ENCODE measurements at regions of chr1 and their contacts with region 1.

Region 1: DNA sequence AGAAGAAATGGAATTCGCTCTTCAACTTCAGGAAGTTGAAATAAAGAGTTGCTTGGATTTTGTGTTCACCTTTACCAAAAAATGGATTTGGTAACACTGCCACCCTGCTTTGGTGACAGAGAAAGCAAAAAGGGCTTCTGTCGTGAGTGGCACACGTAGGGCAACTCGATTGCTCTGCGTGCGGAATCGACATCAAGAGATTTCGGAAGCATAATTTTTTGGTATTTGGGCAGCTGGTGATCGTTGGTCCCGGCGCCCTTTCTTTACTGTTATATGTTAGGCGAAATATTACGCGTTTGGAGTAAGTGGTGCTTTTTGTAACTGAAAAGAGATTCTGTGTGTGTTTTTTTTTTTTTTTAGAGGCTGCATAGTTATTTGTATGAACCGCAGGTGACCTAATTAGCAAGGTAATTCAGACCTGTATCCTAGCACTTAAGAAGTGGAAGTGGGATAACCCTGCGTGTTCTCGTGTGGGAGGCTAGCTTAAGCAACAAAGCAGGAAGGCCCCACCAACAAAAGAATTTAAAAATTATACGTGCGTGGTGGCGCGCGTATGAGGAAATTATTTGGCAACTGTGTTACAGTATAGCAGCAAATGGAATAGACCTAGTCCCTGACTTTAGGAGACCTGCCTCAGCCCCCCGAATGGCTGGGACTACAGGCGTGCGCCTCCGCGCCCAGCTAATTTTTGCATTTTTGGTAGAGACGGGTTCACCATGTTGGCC is at the start of gene RNU11:
- DNase-seq: peak; percentile 74 to 98 (median 80)
- ATAC-seq: peak; percentile 81
- H3K4me3 ChIP-seq: peak within 1 kb of the TSS; percentile 28
- H3K27ac ChIP-seq: peak within 1 kb of the TSS; percentile 95
- H3K4me1 ChIP-seq: peaks cover 28 to 34% of the 10 kb centered on the region in 2 experiments; a peak in 4 of 5 replicates
- H3K27me3 ChIP-seq: no peaks in the 10 kb centered on the region
- CTCF ChIP-seq: peak; percentile 1 to 32 (median 7); a peak in 3 of 6 replicates
- EP300 ChIP-seq: peak; percentile 89
- POLR2A ChIP-seq: peak; percentile 100
- RAD21 ChIP-seq: peak; percentile 38 to 47
- polyA plus RNA-seq, gene RNU11: not detected

Region 2: GRCh38 chr1:28088168-28088961 is 560.3 kb before region 1 on chr1 and contains the start of gene EYA3:
- CTCF ChIA-PET with region 1: no interaction called
- POLR2A ChIA-PET with region 1: interaction called, 11 read pairs
- in situ Hi-C with region 1: no loop called
- intact Hi-C with region 1: no loop called
- DNase-seq: peak; percentile 99 to 100 (median 100)
- ATAC-seq: peak; percentile 94
- H3K4me3 ChIP-seq: peak within 1 kb of the TSS; percentile 76
- H3K27ac ChIP-seq: peak within 1 kb of the TSS; percentile 90
- H3K4me1 ChIP-seq: peaks cover 12 to 14% of the 10 kb centered on the region in 2 experiments
- H3K27me3 ChIP-seq: no peaks in the 10 kb centered on the region
- CTCF ChIP-seq: no peak
- EP300 ChIP-seq: peak; percentile 11; the same call in 1 of the 2 replicates
- POLR2A ChIP-seq: peak; percentile 97
- RAD21 ChIP-seq: no peak
- polyA plus RNA-seq, gene EYA3: 29.4 to 43.6 TPM

Region 3: GRCh38 chr1:28518000-28518744 is 130.5 kb before region 1 on chr1:
- CTCF ChIA-PET with region 1: interaction called, 4 read pairs
- POLR2A ChIA-PET with region 1: interaction called, 22 read pairs
- in situ Hi-C with region 1: no loop called
- intact Hi-C with region 1: loop called (anchors 2 kb)
- DNase-seq: peak; percentile 93 to 96 (median 94)
- ATAC-seq: peak; percentile 76
- H3K4me3 ChIP-seq: peak overlapping the region; percentile 74
- H3K27ac ChIP-seq: peak overlapping the region; percentile 99
- H3K4me1 ChIP-seq: peaks cover 46 to 47% of the 10 kb centered on the region in 2 experiments
- H3K27me3 ChIP-seq: no peaks in the 10 kb centered on the region
- CTCF ChIP-seq: peak; percentile 96 to 99 (median 96)
- EP300 ChIP-seq: no peak
- POLR2A ChIP-seq: peak; percentile 87
- RAD21 ChIP-seq: peak; percentile 91 to 94

Region 4: GRCh38 chr1:28668191-28668955 is 19.7 kb after region 1 on chr1 and contains the start of gene GMEB1:
- CTCF ChIA-PET with region 1: no interaction called
- POLR2A ChIA-PET with region 1: interaction called, 240 read pairs
- in situ Hi-C with region 1: no loop called
- intact Hi-C with region 1: loop called (anchors 2 kb)
- DNase-seq: peak; percentile 95 to 100 (median 98)
- ATAC-seq: peak; percentile 91
- H3K4me3 ChIP-seq: peak within 1 kb of the TSS; percentile 98
- H3K27ac ChIP-seq: peak within 1 kb of the TSS; percentile 95
- H3K4me1 ChIP-seq: peaks cover 3 to 28% of the 10 kb centered on the region in 2 experiments; a peak in 4 of 5 replicates
- H3K27me3 ChIP-seq: no peaks in the 10 kb centered on the region
- CTCF ChIP-seq: peak in 1 of 3 experiments; percentile 9; a peak in 1 of 6 replicates
- EP300 ChIP-seq: no peak
- POLR2A ChIP-seq: peak; percentile 62; the same call in 1 of the 2 replicates
- RAD21 ChIP-seq: no peak
- polyA plus RNA-seq, gene GMEB1: 8.5 TPM

Region 5: DNA sequence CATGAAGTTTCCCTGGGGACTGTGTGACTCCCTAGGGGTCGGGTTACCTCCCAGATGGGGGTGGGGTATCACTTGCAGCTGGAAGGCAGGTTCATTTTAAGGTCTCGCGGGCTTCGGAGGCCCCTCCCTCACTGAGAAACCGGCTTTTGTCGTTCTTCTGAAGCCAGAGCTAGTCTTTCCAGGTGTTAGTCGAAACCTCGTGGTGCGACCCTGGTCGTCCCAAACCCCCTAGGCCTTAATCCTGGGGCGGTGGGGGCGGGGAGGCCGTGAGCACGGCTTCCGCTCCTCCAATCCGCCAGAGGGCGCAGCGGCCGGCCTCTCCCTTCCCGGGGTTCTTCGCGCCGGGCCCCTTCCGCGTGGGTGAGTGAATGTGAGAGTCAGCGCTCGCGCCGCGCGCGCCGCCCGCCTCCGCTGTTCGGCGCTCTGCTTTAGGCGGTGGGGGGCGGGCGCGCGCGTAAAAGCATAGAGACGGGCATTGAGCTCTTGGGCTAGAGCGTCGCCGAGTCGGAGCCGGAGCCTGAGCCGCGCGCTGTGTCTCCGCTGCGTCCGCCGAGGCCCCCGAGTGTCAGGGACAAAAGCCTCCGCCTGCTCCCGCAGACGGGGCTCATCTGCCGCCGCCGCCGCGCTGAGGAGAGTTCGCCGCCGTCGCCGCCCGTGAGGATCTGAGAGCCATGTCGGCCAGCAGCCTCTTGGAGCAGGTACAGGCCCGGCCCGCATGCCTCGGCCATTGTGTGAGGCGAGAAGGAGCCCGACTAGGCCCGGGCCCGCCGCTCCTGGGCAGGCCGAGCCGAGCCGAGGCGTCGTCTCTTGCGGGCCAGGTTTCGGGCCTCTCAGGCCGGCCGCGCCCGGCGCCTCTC is 88.0 kb after region 1 on chr1 and contains the start of gene YTHDF2:
- CTCF ChIA-PET with region 1: interaction called, 3 read pairs
- POLR2A ChIA-PET with region 1: interaction called, 52 read pairs
- in situ Hi-C with region 1: no loop called
- intact Hi-C with region 1: loop called (anchors 1 kb)
- DNase-seq: peak; percentile 92 to 100 (median 96)
- ATAC-seq: peak; percentile 94
- H3K4me3 ChIP-seq: peak within 1 kb of the TSS; percentile 96
- H3K27ac ChIP-seq: peak within 1 kb of the TSS; percentile 92
- H3K4me1 ChIP-seq: peaks cover 18 to 24% of the 10 kb centered on the region in 2 experiments; a peak in 4 of 5 replicates
- H3K27me3 ChIP-seq: no peaks in the 10 kb centered on the region
- CTCF ChIP-seq: peak; percentile 82 to 95 (median 86)
- EP300 ChIP-seq: peak; percentile 42; the same call in 1 of the 2 replicates
- POLR2A ChIP-seq: peak; percentile 86
- RAD21 ChIP-seq: peak; percentile 36 to 54
- polyA plus RNA-seq, gene YTHDF2: 41.0 to 47.2 TPM

Region 6: GRCh38 chr1:28815533-28816185 is 167.0 kb after region 1 on chr1:
- CTCF ChIA-PET with region 1: no interaction called
- POLR2A ChIA-PET with region 1: interaction called, 11 read pairs
- in situ Hi-C with region 1: no loop called
- intact Hi-C with region 1: no loop called
- DNase-seq: no peak
- ATAC-seq: peak; percentile 30
- H3K4me3 ChIP-seq: no peak overlapping the region
- H3K27ac ChIP-seq: no peak overlapping the region
- H3K4me1 ChIP-seq: peaks cover 0 to 21% of the 10 kb centered on the region in 2 experiments; a peak in 2 of 5 replicates
- H3K27me3 ChIP-seq: peaks cover 62 to 92% of the 10 kb centered on the region in 2 experiments
- CTCF ChIP-seq: no peak
- EP300 ChIP-seq: no peak
- POLR2A ChIP-seq: no peak
- RAD21 ChIP-seq: no peak

Region 7: GRCh38 chr1:29181413-29182225 is 533.0 kb after region 1 on chr1 and contains the start of gene SRSF4:
- CTCF ChIA-PET with region 1: no interaction called
- POLR2A ChIA-PET with region 1: interaction called, 10 read pairs
- in situ Hi-C with region 1: no loop called
- intact Hi-C with region 1: loop called (anchors 10 kb)
- DNase-seq: peak; percentile 98 to 100 (median 98)
- ATAC-seq: peak; percentile 92
- H3K4me3 ChIP-seq: peak within 1 kb of the TSS; percentile 95
- H3K27ac ChIP-seq: peak within 1 kb of the TSS; percentile 100
- H3K4me1 ChIP-seq: peaks cover 20 to 32% of the 10 kb centered on the region in 2 experiments
- H3K27me3 ChIP-seq: no peaks in the 10 kb centered on the region
- CTCF ChIP-seq: peak; percentile 94 to 98 (median 95)
- EP300 ChIP-seq: peak; percentile 50; the same call in 1 of the 2 replicates
- POLR2A ChIP-seq: peak; percentile 94
- RAD21 ChIP-seq: peak; percentile 51 to 70
- polyA plus RNA-seq, gene SRSF4: 15.9 to 18.4 TPM

Measured in K562 (cell line).